Breast epithelium (tissue), 4 donors: ENCODE measurements at regions of chrX and their contacts with region 1.

Region 1: DNA sequence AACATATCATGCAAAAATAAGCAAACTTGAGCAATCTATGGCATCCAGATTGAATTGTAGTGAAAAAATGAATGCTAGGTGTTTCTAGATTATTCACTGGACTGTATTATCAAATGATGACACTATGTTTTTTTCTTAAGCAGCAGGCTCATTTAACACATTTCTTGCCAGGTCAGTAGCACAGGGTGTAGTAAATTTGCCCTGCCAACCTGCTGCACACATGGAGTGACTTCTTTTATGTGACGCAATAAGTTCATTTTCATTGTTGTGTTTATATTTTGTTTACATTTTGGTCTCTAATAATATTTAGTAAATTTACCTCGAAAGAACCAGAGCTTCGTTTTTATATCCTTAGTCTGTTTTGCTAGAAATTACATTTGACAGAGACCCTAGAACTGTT is 9.5 kb downstream of the VBP1 start:
- DNase-seq: no peak
- H3K4me3 ChIP-seq: no peak overlapping the region
- H3K27ac ChIP-seq: no peak overlapping the region
- H3K4me1 ChIP-seq: no peaks in the 10 kb centered on the region
- H3K27me3 ChIP-seq: no peaks in the 10 kb centered on the region
- CTCF ChIP-seq: no peak
- POLR2A ChIP-seq: no peak

Region 2: DNA sequence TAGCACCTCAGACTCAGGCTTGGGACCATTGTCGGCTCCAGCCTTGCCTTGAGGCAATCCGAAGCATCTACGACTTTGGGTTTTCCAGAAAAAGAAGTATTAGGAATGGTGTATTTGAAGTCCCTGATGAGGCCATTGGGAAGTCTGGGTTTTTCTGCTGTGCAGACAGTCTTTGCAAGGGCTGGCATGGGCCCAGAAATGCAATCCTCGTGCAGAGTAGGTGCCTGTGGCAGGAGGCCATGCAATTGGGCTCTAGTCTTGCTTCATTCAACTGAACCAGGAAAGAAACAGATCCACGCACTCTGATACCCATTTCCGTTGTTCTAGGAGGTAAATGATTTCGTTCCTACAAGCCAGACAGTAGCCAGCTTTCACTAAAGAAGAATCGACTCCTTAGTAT is 1802.1 kb before region 1 on chrX:
- intact Hi-C with region 1: loop called (anchors 10 kb)
- DNase-seq: peak in 1 of 2 donors; percentile 7
- H3K4me3 ChIP-seq: no peak overlapping the region
- H3K27ac ChIP-seq: no peak overlapping the region
- H3K4me1 ChIP-seq: no peaks in the 10 kb centered on the region
- H3K27me3 ChIP-seq: peaks cover 0 to 51% of the 10 kb centered on the region in 2 donors
- CTCF ChIP-seq: no peak
- POLR2A ChIP-seq: no peak